CD4-positive, alpha-beta memory T cell (primary cell): ENCODE measurements at regions of chr17 and their contacts with region 1.

Region 1: GRCh38 chr17:47205419-47205963 is 3.7 kb upstream of the MYL4 start:
- DNase-seq: peak; percentile 69 to 87 (median 80)
- H3K4me3 ChIP-seq: peak overlapping the region; percentile 24 to 54
- H3K4me3 Mint-ChIP-seq: peak overlapping the region; percentile 79 to 89 (median 86)
- H3K27ac ChIP-seq: peak overlapping the region; percentile 70
- H3K27ac Mint-ChIP-seq: peak overlapping the region; percentile 93 to 97 (median 95)
- H3K4me1 ChIP-seq: peaks cover 58% of the 10 kb centered on the region
- H3K4me1 Mint-ChIP-seq: peaks cover 42 to 67% (median 55%) of the 10 kb centered on the region in 4 donors
- H3K27me3 ChIP-seq: no peaks in the 10 kb centered on the region
- H3K27me3 Mint-ChIP-seq: no peaks in the 10 kb centered on the region

Region 2: DNA sequence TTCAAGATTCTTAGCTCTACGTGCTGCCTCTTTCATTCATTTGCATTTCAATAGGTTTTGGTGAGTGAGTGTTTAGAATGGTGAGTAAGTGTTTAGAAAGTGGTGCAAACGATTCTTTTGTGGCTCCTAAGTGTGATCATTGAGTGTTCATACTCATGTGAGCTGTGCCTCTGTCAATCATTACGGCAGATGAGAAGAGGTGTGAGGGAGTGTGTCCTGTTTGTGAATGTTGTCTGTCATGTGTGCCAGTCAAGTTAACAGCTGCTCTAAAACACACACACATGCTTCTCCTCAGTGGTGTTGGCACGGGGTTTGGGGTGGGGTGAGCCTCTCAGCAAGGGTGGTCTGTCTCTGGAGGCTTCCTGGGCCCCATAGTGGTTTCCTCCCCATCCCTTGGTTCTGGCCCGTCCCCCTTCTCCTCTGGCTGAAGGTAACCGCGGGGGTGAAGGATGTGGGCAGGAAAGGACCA is 15.1 kb after region 1 on chr17:
- CTCF ChIA-PET with region 1: interaction called, 4 read pairs
- POLR2A ChIA-PET with region 1: interaction called, 35 read pairs
- intact Hi-C with region 1: loop called (anchors 1 kb)
- DNase-seq: peak; percentile 8 to 45 (median 13)
- H3K4me3 ChIP-seq: no peak overlapping the region
- H3K4me3 Mint-ChIP-seq: peak overlapping the region in 5 of 8 donors; percentile 2 to 44 (median 14)
- H3K27ac ChIP-seq: no peak overlapping the region
- H3K27ac Mint-ChIP-seq: peak overlapping the region in 6 of 7 donors; percentile 9 to 77 (median 60)
- H3K4me1 ChIP-seq: peaks cover 55% of the 10 kb centered on the region
- H3K4me1 Mint-ChIP-seq: peaks cover 15 to 51% (median 33%) of the 10 kb centered on the region in 4 donors
- H3K27me3 ChIP-seq: no peaks in the 10 kb centered on the region
- H3K27me3 Mint-ChIP-seq: no peaks in the 10 kb centered on the region